Breast epithelium (tissue), 4 donors: ENCODE measurements at regions of chr17 and their contacts with region 1.

Region 1: GRCh38 chr17:13601776-13602551 is at the start of gene HS3ST3A1:
- DNase-seq: no peak
- H3K4me3 ChIP-seq: peak within 1 kb of the TSS; percentile 35 to 70 (median 55)
- H3K27ac ChIP-seq: no peak within 1 kb of the TSS
- H3K4me1 ChIP-seq: peaks cover 4 to 7% of the 10 kb centered on the region in 2 donors
- H3K27me3 ChIP-seq: peaks cover 3 to 40% of the 10 kb centered on the region in 2 donors
- CTCF ChIP-seq: no peak
- POLR2A ChIP-seq: no peak
- total RNA-seq, gene HS3ST3A1: 0.66 to 1.4 (median 1.0) TPM

Region 2: DNA sequence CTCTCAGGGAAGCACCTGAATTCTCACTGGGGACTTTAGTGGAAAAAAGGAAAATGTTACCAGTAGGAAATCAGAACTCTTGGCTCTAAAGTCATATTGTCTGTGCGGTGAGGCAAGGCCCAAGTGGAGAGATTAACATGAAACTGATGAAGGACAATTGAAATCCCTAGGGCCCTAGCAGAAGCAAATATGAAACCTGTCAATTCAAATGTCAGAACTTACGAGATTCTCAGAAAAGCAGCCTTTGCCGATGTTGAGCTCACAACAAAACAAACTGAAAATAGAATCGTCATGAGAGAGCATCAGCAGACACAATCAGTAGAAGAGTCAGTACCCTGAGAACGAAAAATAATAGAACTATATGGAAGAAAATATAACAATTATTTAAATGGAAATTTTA is 692.9 kb before region 1 on chr17:
- intact Hi-C with region 1: loop called (anchors 10 kb)
- DNase-seq: no peak
- H3K4me3 ChIP-seq: no peak overlapping the region
- H3K27ac ChIP-seq: no peak overlapping the region
- H3K4me1 ChIP-seq: no peaks in the 10 kb centered on the region
- H3K27me3 ChIP-seq: no peaks in the 10 kb centered on the region
- CTCF ChIP-seq: no peak
- POLR2A ChIP-seq: no peak

Region 3: GRCh38 chr17:13557077-13557476 is 44.9 kb before region 1 on chr17:
- intact Hi-C with region 1: no loop called
- DNase-seq: no peak
- H3K4me3 ChIP-seq: no peak overlapping the region
- H3K27ac ChIP-seq: no peak overlapping the region
- H3K4me1 ChIP-seq: no peaks in the 10 kb centered on the region
- H3K27me3 ChIP-seq: no peaks in the 10 kb centered on the region
- CTCF ChIP-seq: no peak
- POLR2A ChIP-seq: no peak

Region 4: DNA sequence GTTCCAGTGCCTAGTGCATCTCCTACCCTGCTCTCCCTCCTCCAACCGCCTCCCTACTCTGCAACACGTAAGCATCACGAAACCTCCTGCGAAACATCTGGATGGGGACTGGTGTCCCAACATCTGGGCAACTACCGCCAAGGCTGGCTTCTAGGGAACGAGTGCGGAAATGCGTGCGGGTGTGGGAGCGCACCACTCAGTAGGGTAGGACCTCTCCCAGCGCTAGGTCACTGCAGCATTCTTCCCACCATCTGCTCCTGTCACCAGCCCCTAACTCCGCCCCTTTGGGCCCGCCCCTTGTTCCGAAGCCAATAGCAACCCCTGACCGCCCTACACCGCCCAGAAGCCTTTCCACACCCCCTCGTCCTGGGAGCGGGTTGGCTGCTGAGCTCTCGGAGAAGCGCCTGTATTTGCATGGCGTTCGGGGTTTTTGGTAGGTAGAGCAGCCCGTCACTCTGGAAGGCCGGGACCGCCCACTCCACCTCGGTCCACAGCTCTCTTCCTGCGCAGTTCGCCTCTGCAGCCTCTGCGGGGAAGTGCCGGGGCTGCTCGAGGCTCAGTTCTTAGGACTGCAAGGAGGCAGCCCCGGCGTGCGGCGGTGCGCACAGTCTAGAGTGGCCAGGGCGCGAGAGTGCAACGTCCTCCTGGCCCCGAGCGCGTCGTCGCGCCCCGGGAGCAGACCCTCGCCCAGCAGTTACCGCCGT is 698.8 kb after region 1 on chr17 and contains the start of gene HS3ST3B1:
- intact Hi-C with region 1: loop called (anchors 10 kb)
- DNase-seq: peak; percentile 95 to 99
- H3K4me3 ChIP-seq: peak within 1 kb of the TSS; percentile 50 to 89 (median 78)
- H3K27ac ChIP-seq: peak within 1 kb of the TSS; percentile 61 to 86
- H3K4me1 ChIP-seq: peaks cover 5 to 6% of the 10 kb centered on the region in 2 donors
- H3K27me3 ChIP-seq: peaks cover 0 to 53% of the 10 kb centered on the region in 2 donors
- CTCF ChIP-seq: peak; percentile 9 to 44 (median 33)
- POLR2A ChIP-seq: peak; percentile 39
- total RNA-seq, gene HS3ST3B1: 0.96 to 3.6 (median 2.8) TPM